ENCODE measurements at regions of chr20 and their contacts with region 1.

Region 1: DNA sequence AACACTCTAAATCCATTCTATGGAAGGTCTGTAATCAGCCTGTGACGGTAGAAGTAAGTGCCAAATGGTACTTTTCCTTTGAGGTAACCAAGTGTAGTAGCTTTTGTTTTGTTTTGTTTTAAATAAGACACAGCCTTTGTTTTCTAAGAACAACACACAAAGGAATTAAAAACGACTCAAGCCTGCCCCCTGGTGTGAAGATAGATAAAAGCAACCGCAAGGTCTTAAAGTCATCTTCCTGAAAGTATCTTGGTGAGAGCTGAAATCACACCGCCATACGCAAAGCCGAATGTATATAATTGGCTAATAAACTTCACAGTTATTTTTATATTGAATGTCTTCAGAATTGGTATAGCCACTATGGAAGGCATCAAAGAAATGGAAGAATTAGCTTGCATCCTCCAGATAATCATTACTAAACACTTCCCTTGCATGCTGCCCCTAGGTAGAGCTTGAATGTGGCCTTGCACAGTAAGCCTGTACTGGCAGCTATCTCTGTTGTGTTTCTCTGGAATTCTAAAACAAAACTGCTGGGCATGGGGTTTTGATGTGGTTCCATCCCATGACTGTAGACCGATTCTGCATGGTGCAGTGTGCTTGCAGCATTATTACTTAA is 95.6 kb downstream of the LAMP5 start:
- DNase-seq: peak in 1 of 2 experiments; percentile 83
- ATAC-seq: peak; percentile 65 to 85; a peak in 5 of 6 replicates
- H3K4me3 ChIP-seq: no peak overlapping the region
- H3K27ac ChIP-seq: peak overlapping the region in 1 of 2 experiments; percentile 5; a peak in 1 of 6 replicates
- H3K4me1 ChIP-seq: no peaks in the 10 kb centered on the region
- CTCF ChIP-seq: peak; percentile 97
- EP300 ChIP-seq: no peak
- POLR2A ChIP-seq: no peak
- RAD21 ChIP-seq: peak; percentile 96 to 98

Region 2: DNA sequence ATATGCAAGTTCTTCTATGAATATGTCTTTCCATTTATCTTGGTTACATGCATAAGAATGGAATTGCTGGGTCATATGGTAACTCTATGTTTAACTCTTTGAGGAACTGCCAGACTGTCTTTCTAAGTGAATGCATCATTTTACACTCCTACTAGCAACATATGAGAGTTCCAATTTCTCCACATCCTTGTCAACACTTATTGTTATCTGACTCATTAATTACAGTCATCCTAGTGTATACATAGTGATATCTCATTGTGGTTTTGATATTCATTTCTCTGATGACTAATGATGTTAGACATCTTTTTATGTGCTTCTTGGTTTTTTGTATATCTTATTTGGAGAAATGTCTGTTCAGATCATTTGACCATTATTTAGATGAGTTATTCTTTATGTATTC is 192.3 kb before region 1 on chr20:
- CTCF ChIA-PET with region 1: interaction called, 385 read pairs
- POLR2A ChIA-PET with region 1: no interaction called
- DNase-seq: no peak
- ATAC-seq: no peak
- H3K4me3 ChIP-seq: no peak overlapping the region
- H3K27ac ChIP-seq: no peak overlapping the region
- H3K4me1 ChIP-seq: no peaks in the 10 kb centered on the region
- CTCF ChIP-seq: no peak
- EP300 ChIP-seq: no peak
- POLR2A ChIP-seq: no peak
- RAD21 ChIP-seq: no peak

Region 3: DNA sequence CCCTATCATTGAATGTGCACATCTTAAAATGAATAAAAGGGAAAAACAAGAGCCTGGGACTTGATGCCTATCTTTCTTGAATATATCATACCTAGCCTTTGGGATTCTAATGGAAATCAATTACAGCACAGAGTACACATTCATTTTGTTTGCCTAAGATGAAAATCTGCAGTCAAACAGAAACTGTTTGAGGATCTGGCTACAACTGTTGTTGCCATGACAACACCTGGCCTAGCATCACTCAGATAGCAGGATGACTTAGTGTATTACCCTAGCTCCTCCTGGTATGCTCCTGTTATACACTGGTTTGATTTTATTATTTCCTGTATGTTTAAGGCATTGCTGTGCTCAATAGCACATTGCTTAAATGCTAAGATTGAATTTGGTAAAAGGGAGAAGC is 167.1 kb before region 1 on chr20:
- CTCF ChIA-PET with region 1: interaction called, 16 read pairs
- POLR2A ChIA-PET with region 1: no interaction called
- DNase-seq: peak in 1 of 2 experiments; percentile 39
- ATAC-seq: peak in 1 of 2 experiments; percentile 52; a peak in 2 of 6 replicates
- H3K4me3 ChIP-seq: no peak overlapping the region
- H3K27ac ChIP-seq: no peak overlapping the region
- H3K4me1 ChIP-seq: no peaks in the 10 kb centered on the region
- CTCF ChIP-seq: no peak
- EP300 ChIP-seq: no peak
- POLR2A ChIP-seq: no peak
- RAD21 ChIP-seq: no peak

Region 4: GRCh38 chr20:9458138-9458796 is 151.7 kb before region 1 on chr20:
- CTCF ChIA-PET with region 1: interaction called, 40 read pairs
- POLR2A ChIA-PET with region 1: no interaction called
- DNase-seq: peak; percentile 4 to 38
- ATAC-seq: peak in 1 of 2 experiments; percentile 57; a peak in 3 of 6 replicates
- H3K4me3 ChIP-seq: no peak overlapping the region
- H3K27ac ChIP-seq: no peak overlapping the region
- H3K4me1 ChIP-seq: peaks cover 13% of the 10 kb centered on the region
- CTCF ChIP-seq: no peak; the same call in 2 of the 3 replicates
- EP300 ChIP-seq: no peak
- POLR2A ChIP-seq: no peak
- RAD21 ChIP-seq: peak in 1 of 2 experiments; percentile 40; a peak in 2 of 5 replicates

Region 5: DNA sequence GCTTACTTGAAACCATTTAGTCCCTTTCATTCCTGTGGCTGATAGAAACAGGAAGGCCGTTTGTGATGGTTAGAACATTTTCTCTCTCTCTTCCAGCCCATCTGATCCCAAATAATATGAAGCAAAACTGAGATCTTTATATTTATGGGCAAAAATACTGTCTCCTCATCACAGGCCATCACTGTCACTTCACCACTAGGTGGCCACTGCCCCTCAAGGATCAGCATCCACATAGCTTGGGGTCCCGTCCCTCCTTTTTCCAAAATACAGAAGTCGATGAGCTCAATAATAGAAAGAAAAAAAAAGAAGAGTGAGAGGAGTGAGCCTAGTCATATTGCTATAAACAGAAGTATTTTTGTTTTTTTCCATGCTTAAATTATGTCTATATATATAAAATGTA is 142.0 kb before region 1 on chr20:
- CTCF ChIA-PET with region 1: interaction called, 15 read pairs
- POLR2A ChIA-PET with region 1: no interaction called
- DNase-seq: peak; percentile 16 to 17
- ATAC-seq: peak in 1 of 2 experiments; percentile 76; a peak in 3 of 6 replicates
- H3K4me3 ChIP-seq: no peak overlapping the region
- H3K27ac ChIP-seq: no peak overlapping the region
- H3K4me1 ChIP-seq: no peaks in the 10 kb centered on the region
- CTCF ChIP-seq: peak; percentile 61
- EP300 ChIP-seq: no peak
- POLR2A ChIP-seq: no peak
- RAD21 ChIP-seq: peak; percentile 63 to 66

Region 6: GRCh38 chr20:9565910-9566550 is 44.0 kb before region 1 on chr20:
- CTCF ChIA-PET with region 1: interaction called, 12 read pairs
- POLR2A ChIA-PET with region 1: no interaction called
- DNase-seq: no peak
- ATAC-seq: no peak
- H3K4me3 ChIP-seq: no peak overlapping the region
- H3K27ac ChIP-seq: no peak overlapping the region
- H3K4me1 ChIP-seq: no peaks in the 10 kb centered on the region
- CTCF ChIP-seq: no peak
- EP300 ChIP-seq: no peak
- POLR2A ChIP-seq: no peak
- RAD21 ChIP-seq: no peak

Region 7: GRCh38 chr20:9583151-9583550 is 26.8 kb before region 1 on chr20:
- CTCF ChIA-PET with region 1: interaction called, 13 read pairs
- POLR2A ChIA-PET with region 1: no interaction called
- DNase-seq: no peak
- ATAC-seq: no peak
- H3K4me3 ChIP-seq: no peak overlapping the region
- H3K27ac ChIP-seq: no peak overlapping the region
- H3K4me1 ChIP-seq: no peaks in the 10 kb centered on the region
- CTCF ChIP-seq: no peak
- EP300 ChIP-seq: no peak
- POLR2A ChIP-seq: no peak
- RAD21 ChIP-seq: no peak

Measured in A549 (cell line).